Posterior vena cava (tissue), 2 donors: ENCODE measurements at regions of chr1 and their contacts with region 1.

Region 1: GRCh38 chr1:156383023-156383422 is 14.0 kb downstream of the RHBG start:
- DNase-seq: no peak

Region 2: GRCh38 chr1:156338180-156338973 is 44.6 kb before region 1 on chr1 and contains the starts of genes CCT3 and TSACC:
- intact Hi-C with region 1: no loop called
- DNase-seq: peak; percentile 100
- total RNA-seq, gene CCT3: 124 to 133 TPM
- total RNA-seq, gene TSACC: not detected

Region 3: DNA sequence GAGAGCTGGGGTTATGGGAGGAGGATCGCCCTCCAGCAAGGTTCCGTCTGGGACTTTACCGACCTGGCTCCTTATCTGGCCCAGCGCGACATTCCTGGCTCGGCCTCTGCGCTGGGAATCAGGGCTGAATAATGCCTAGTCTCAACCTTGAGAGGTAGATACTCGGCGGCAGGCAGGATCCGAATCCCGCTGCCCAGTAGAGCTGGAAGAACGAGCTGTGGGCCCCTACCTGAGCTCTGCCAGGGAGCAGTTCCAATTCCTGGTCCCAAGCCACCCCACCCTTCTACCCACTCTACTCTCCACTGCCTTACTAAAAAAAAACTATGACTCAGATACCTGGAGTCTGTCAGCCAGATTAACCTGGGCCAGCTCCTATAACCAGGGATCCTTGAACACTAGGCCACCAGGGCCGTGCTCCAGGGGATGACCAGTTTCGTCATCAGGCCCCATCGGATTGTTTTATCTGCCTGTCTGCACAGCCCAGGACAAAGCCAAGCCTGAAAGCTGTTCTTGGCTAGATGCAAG is 39.6 kb after region 1 on chr1:
- intact Hi-C with region 1: loop called in 1 of 2 experiments (anchors 1 kb)
- DNase-seq: no peak

Region 4: DNA sequence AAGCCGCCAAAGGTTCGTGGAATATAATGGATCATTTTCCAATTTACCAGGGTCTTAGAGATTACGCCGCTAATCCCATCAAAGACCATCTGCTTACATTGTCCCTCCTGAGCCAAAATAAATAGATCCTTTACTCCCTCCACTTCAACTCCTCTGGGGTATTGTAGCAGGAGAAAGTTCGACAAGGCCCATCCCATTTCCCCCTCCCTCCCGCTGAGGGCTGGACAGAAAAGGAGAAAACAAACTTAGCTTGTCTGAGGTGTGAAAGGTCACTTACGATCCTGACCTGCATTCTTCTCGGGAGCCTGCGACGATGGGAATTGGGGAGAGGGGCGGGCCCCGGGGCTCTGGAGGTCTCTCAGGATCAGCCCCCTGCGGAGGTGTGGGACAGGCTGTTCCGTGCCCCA is 56.8 kb after region 1 on chr1:
- intact Hi-C with region 1: loop called in 1 of 2 experiments (anchors 2 kb)
- DNase-seq: no peak

Region 5: DNA sequence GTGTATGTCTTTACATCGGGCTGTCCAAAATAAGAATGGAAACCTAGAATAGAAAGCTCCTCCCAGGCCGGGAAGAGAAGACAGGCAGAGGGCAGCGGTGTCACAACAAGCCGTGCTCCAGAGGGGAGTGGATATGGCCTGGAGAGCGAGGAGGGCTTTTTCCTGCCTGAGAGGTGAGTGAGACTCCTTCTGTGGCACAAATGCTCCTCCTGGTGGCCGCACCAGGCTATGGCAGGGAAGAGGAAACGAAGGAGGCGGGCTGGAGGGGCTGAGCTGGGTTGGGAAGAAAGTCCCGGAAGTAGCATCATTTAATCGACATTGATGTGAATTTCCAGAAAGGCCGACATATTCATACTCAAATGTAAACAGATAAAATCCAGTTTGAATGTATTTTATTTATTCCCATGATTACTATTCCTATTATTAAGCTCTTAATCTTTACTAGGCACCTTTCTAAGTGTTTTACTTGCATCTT is 62.8 kb after region 1 on chr1:
- intact Hi-C with region 1: loop called (anchors 2 kb)
- DNase-seq: peak; percentile 93

Region 6: DNA sequence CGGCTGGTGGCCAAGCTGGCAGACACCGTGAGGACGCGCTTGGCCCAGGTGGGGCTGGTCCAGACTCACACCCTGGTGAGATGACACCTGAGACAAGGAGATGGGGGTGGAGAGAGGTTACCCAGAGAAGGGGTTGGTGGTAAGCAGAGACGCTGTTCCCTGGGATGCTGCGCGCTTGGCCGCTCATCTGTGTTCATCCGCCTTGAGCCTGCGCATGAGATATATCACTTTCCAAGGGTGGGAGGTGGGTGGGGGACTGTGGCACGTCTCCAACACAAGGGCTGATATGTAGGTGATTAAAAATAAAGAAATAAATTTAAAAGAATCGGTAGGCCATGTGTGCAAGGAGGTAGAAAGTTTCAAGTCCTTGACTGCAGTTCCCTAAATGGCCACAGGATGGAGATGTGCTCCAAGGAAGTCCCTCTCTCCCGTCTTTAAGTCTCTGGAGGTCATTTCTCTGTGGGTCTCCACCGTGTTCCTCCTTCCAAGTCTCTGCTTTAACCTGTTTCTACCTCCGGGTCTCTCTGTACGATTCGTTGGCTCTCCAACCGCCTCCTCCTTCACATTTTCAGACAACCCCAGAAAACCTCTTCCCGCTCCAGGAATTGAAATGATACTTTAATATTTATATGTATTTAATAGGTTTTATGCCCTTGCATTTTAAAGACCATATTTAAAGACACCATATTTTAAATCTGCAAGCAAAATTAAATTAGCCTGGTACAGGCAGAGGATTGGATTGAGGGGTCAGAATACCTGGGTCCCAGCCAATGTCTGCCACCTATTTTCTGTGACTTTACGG is 201.0 kb after region 1 on chr1:
- intact Hi-C with region 1: loop called in 1 of 2 experiments (anchors 10 kb)
- DNase-seq: no peak

Region 7: GRCh38 chr1:156608036-156608674 is 225.1 kb after region 1 on chr1:
- intact Hi-C with region 1: loop called (anchors 5 kb)
- DNase-seq: no peak

Region 8: GRCh38 chr1:156659994-156660751 is 277.1 kb after region 1 on chr1:
- intact Hi-C with region 1: loop called in 1 of 2 experiments (anchors 10 kb)
- DNase-seq: peak; percentile 99